Prostate gland (tissue), 2 donors: ENCODE measurements at regions of chr16 and their contacts with region 1.

Region 1: GRCh38 chr16:27367461-27368357 is 34.3 kb upstream of the IL21R start:
- DNase-seq: peak; percentile 65
- H3K4me3 ChIP-seq: no peak overlapping the region
- H3K27ac ChIP-seq: peak overlapping the region in 1 of 2 donors; percentile 1
- H3K4me1 ChIP-seq: no peaks in the 10 kb centered on the region
- H3K27me3 ChIP-seq: no peaks in the 10 kb centered on the region
- CTCF ChIP-seq: peak; percentile 82 to 87 (median 86)
- POLR2A ChIP-seq: no peak

Region 2: GRCh38 chr16:27154705-27155521 is 212.8 kb before region 1 on chr16:
- intact Hi-C with region 1: loop called (anchors 5 kb)
- DNase-seq: peak; percentile 25
- H3K4me3 ChIP-seq: no peak overlapping the region
- H3K27ac ChIP-seq: no peak overlapping the region
- H3K4me1 ChIP-seq: no peaks in the 10 kb centered on the region
- H3K27me3 ChIP-seq: no peaks in the 10 kb centered on the region
- CTCF ChIP-seq: peak; percentile 83 to 98 (median 94)
- POLR2A ChIP-seq: no peak

Region 3: GRCh38 chr16:27179500-27180072 is 188.1 kb before region 1 on chr16:
- intact Hi-C with region 1: loop called (anchors 2 kb)
- DNase-seq: peak; percentile 57
- H3K4me3 ChIP-seq: no peak overlapping the region
- H3K27ac ChIP-seq: no peak overlapping the region
- H3K4me1 ChIP-seq: no peaks in the 10 kb centered on the region
- H3K27me3 ChIP-seq: no peaks in the 10 kb centered on the region
- CTCF ChIP-seq: peak; percentile 71 to 85 (median 73)
- POLR2A ChIP-seq: no peak

Region 4: GRCh38 chr16:27235055-27235937 is 132.4 kb before region 1 on chr16:
- intact Hi-C with region 1: loop called (anchors 1 kb)
- DNase-seq: peak; percentile 83
- H3K4me3 ChIP-seq: peak overlapping the region in 1 of 2 donors; percentile 3
- H3K27ac ChIP-seq: peak overlapping the region; percentile 56 to 80
- H3K4me1 ChIP-seq: peaks cover 28% of the 10 kb centered on the region
- H3K27me3 ChIP-seq: no peaks in the 10 kb centered on the region
- CTCF ChIP-seq: peak; percentile 54 to 80 (median 74)
- POLR2A ChIP-seq: no peak

Region 5: GRCh38 chr16:27313422-27314160 is 54.1 kb before region 1 on chr16 and contains the start of gene IL4R:
- intact Hi-C with region 1: loop called (anchors 5 kb)
- DNase-seq: peak; percentile 42
- H3K4me3 ChIP-seq: peak within 1 kb of the TSS; percentile 76 to 79
- H3K27ac ChIP-seq: peak within 1 kb of the TSS; percentile 91 to 92
- H3K4me1 ChIP-seq: peaks cover 6% of the 10 kb centered on the region
- H3K27me3 ChIP-seq: no peaks in the 10 kb centered on the region
- CTCF ChIP-seq: no peak
- POLR2A ChIP-seq: peak; percentile 50
- total RNA-seq, gene IL4R: 30.7 to 89.2 TPM

Region 6: DNA sequence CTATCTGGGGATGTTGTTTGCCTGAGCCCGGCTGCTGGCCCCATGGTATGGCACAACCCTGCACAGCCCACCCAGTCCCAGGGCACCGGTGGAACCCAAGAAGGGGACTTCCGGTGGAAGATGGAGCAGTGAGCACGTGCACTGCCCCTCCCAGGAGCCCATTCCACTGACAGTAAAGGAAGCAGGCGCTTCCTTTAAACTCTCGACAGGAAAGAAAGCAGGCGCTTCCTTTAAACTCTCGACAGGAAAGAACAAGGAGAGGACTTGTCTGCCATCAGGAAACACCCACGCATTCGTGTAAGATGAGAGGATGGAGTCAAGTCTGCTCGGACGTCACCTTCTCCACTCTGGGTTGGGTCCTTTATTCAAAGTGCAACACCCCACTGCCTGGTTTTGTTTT is 88.0 kb after region 1 on chr16:
- intact Hi-C with region 1: loop called (anchors 5 kb)
- DNase-seq: no peak
- H3K4me3 ChIP-seq: no peak overlapping the region
- H3K27ac ChIP-seq: no peak overlapping the region
- H3K4me1 ChIP-seq: no peaks in the 10 kb centered on the region
- H3K27me3 ChIP-seq: no peaks in the 10 kb centered on the region
- CTCF ChIP-seq: no peak
- POLR2A ChIP-seq: no peak